ENCODE measurements at regions of chr17 and their contacts with region 1.

Region 1: GRCh38 chr17:41648411-41649195 is 24.2 kb upstream of the KRT17 start:
- DNase-seq: peak; percentile 76
- H3K4me3 Mint-ChIP-seq: peak overlapping the region; percentile 73
- H3K27ac Mint-ChIP-seq: peak overlapping the region; percentile 52
- H3K4me1 Mint-ChIP-seq: peaks cover 10% of the 10 kb centered on the region
- H3K27me3 Mint-ChIP-seq: peaks cover 2% of the 10 kb centered on the region

Region 2: DNA sequence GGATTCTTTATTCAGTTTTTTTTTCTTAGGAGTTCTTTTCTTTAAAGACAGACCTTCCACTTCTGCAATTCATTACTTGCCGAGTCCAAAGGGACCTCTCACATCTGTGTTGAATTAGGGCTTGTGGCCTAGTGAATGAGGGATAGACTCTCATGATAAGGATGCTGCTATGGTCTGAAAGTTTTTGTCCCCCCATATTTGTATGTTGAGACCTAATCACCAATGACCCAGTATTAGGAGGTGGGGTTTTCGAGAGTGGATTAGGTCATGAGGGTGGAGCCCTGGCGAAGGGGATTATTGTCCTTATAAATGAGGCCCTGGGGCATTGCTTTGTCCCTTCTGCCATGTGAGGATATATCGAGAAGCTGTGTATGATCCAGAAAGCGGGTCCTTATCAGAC is 791.1 kb before region 1 on chr17:
- intact Hi-C with region 1: loop called (anchors 5 kb)
- DNase-seq: no peak
- H3K4me3 Mint-ChIP-seq: no peak overlapping the region
- H3K27ac Mint-ChIP-seq: no peak overlapping the region
- H3K4me1 Mint-ChIP-seq: no peaks in the 10 kb centered on the region
- H3K27me3 Mint-ChIP-seq: peaks cover 20% of the 10 kb centered on the region

Region 3: DNA sequence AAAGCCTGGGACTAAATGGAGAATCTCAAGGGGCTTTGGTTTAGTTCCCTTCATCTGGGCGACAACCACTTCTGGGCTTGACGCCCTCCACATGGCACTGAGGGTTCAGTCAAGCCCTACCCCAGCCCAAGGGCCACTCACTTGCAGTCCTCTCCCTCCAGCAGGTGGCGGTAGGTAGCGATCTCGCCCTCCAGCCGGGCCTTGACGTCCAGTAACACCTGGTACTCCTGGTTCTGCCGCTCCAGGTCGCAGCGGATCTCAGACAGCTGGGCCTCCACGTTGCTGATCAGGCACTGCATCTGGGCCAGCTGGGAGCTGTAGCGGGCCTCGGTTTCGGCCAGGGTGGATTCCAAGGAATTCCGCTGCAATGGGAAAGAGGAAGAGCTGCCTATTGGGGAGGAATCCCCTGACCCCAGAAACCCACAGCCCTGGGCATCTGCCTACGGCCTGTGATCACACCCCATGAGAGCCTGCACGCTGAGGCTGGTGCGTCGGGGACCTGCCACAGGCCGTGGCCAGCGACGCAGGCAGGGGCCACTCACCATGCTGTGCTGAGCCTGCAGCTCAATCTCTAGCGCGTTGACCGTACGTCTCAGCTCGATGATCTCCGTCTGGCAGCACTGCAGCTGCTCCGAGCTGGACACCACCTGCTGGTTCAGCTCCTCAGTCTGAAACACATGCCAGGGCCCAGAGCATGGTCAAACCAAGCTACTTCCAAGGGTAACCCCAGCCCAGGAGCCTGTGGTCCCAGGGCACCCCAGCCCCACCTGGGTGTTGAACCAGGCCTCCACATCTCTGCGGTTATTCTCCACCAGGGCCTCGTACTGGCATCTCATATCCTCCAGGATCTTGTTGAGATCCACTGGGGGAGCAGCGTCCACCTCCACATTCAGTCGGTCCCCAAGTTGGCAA is 161.5 kb before region 1 on chr17:
- intact Hi-C with region 1: loop called (anchors 1 kb)
- DNase-seq: no peak
- H3K4me3 Mint-ChIP-seq: no peak overlapping the region
- H3K27ac Mint-ChIP-seq: no peak overlapping the region
- H3K4me1 Mint-ChIP-seq: no peaks in the 10 kb centered on the region
- H3K27me3 Mint-ChIP-seq: peaks cover 10% of the 10 kb centered on the region

Region 4: DNA sequence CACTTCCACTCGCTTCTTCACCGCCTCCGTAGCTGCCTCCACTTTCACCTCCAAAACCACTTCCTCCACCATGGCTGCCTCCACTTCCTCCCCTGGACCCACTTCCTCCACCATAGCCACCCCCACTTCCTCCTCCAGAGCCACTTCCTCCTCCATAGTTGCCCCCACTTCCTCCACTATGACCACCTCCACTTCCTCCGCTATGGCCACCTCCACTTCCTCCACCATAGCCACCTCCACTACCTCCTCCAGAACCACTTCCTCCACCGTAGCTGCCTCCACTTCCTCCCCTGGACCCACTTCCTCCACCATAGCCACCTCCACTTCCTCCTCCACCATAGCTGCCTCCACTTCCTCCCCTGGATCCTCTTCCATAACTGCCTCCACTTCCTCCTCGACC is 81.3 kb before region 1 on chr17:
- intact Hi-C with region 1: no loop called
- DNase-seq: no peak
- H3K4me3 Mint-ChIP-seq: no peak overlapping the region
- H3K27ac Mint-ChIP-seq: peak overlapping the region; percentile 67
- H3K4me1 Mint-ChIP-seq: no peaks in the 10 kb centered on the region
- H3K27me3 Mint-ChIP-seq: peaks cover 24% of the 10 kb centered on the region

Region 5: GRCh38 chr17:41579484-41580243 is 68.9 kb before region 1 on chr17:
- intact Hi-C with region 1: loop called (anchors 1 kb)
- DNase-seq: peak; percentile 62
- H3K4me3 Mint-ChIP-seq: no peak overlapping the region
- H3K27ac Mint-ChIP-seq: no peak overlapping the region
- H3K4me1 Mint-ChIP-seq: no peaks in the 10 kb centered on the region
- H3K27me3 Mint-ChIP-seq: peaks cover 23% of the 10 kb centered on the region